A549 (cell line): ENCODE measurements at regions of chr12 and their contacts with region 1.

Region 1: DNA sequence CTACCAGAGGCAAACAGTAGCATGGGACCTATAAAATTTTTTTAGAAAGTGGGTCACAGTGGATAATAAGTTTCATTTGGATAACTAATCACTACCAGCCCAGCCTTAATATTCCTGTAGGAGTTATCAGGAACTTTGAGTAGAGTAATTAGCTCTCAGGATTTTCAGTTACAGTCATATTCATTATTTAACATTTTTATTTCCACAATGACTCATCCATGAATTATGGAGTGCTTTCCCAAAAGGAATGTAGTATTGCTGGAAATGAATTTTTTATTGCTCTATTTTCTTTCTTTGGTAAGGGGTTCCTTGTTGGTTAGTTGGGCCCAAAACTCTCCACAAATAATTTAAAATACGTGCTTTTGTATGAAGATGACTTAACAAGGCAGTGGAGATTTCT is 53.7 kb downstream of the ERC1 start:
- DNase-seq: peak in 1 of 2 experiments; percentile 8
- ATAC-seq: no peak
- H3K4me3 ChIP-seq: no peak overlapping the region
- H3K27ac ChIP-seq: no peak overlapping the region
- H3K4me1 ChIP-seq: peaks cover 20% of the 10 kb centered on the region
- CTCF ChIP-seq: no peak
- EP300 ChIP-seq: no peak
- POLR2A ChIP-seq: no peak
- RAD21 ChIP-seq: no peak

Region 2: DNA sequence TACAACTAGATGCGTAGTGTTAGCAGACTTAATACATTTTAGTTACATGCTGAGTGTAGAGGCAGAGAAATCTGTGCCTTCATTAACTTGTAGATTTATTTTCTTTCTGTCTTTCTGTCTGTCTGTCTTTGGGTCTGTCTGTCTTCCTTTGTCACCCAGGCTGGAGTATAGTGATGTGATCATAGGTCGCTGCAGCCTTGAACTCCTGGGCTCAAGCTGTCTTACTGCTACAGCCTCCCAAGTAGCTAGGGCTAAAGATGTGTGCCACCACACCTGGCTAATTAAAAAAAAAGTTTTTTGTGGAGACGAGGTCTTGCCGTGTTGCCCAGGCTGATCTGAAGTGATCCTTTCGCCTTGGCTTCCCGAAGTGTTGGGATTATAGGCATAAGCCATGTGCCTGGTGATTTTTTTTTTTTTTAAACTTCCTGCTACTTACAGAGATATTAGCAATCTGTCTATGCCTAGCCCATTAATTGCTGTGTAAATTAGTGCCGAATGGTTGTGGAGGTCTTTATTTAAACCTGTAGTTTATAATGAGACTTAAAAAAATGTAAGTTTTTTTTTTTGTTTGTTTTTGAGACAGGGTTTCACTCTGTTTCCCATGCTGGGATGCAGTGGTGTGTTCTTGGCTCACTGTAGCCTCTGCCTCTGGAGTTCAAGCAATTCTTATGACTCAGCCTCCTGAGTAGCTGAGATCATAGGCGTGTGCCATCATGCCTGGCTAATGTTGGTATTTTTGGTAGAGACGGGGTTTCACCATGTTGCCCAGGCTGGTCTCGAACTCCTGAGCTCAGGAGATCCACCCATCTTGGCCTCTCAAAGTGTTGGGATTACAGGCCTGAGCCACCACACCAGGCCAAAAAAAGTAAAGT is 30.8 kb before region 1 on chr12:
- CTCF ChIA-PET with region 1: no interaction called
- POLR2A ChIA-PET with region 1: no interaction called
- DNase-seq: peak in 1 of 2 experiments; percentile 80
- ATAC-seq: peak; percentile 96 to 98
- H3K4me3 ChIP-seq: no peak overlapping the region
- H3K27ac ChIP-seq: peak overlapping the region; percentile 61 to 68
- H3K4me1 ChIP-seq: peaks cover 26% of the 10 kb centered on the region
- CTCF ChIP-seq: no peak
- EP300 ChIP-seq: no peak
- POLR2A ChIP-seq: no peak
- RAD21 ChIP-seq: no peak

Region 3: GRCh38 chr12:1099158-1099557 is 54.5 kb after region 1 on chr12:
- CTCF ChIA-PET with region 1: interaction called, 5 read pairs
- POLR2A ChIA-PET with region 1: interaction called, 10 read pairs
- DNase-seq: no peak
- ATAC-seq: no peak
- H3K4me3 ChIP-seq: no peak overlapping the region
- H3K27ac ChIP-seq: no peak overlapping the region
- H3K4me1 ChIP-seq: no peaks in the 10 kb centered on the region
- CTCF ChIP-seq: no peak
- EP300 ChIP-seq: no peak
- POLR2A ChIP-seq: no peak
- RAD21 ChIP-seq: no peak